ENCODE measurements at regions of chr16 and their contacts with region 1.

Region 1: GRCh38 chr16:30844671-30845449 is 49.0 kb downstream of the BCL7C start:
- DNase-seq: peak; percentile 68 to 89 (median 85)
- H3K4me3 ChIP-seq: no peak overlapping the region
- H3K27ac ChIP-seq: peak overlapping the region in 2 of 5 donors; percentile 11 to 56
- H3K4me1 ChIP-seq: peaks cover 5 to 12% of the 10 kb centered on the region in 2 donors
- H3K27me3 ChIP-seq: no peaks in the 10 kb centered on the region
- CTCF ChIP-seq: peak; percentile 82 to 96 (median 90)
- POLR2A ChIP-seq: no peak

Region 2: DNA sequence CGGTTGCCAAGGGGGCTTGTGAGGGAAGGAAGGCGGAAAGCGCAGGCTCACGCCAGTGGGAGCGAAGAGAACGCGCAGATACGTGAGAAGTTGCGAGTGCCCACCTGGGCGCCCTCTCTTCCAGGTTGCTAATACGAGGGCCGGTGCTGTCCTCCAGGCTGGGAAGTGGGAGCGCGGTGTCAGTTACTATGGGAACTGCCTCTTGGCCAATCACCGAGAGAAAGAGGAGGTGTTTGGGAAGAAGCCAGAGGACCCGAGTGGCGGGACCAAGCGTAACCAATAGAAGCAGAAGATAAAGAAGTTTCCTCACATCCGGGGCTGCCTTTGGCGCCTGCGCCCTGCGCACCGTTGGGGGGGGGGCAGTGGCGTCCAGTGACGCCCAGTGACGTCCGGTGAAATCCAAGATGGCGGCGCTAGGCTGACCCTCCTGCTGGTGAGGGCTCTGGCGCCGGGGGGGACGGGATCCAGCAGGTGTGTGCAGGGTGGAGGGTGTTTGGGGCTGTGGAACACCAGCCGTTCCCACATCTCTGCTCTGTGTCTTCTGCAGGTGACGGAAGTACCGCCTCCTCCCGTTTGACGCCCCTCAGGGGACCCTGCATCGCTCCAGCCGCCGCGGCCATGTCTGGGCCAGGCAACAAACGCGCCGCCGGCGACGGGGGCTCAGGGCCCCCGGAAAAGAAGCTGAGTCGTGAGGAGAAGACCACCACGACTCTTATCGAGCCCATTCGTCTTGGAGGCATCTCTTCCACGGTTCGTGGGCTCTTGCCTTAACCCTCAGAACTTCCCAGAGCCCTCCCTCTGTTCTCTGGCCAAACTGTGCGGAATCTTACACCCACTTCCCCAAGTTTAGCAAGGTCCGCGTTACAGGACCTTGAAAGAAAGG is 82.7 kb before region 1 on chr16 and contains the starts of genes CFAP119 and RNF40:
- intact Hi-C with region 1: no loop called
- DNase-seq: peak; percentile 97 to 99 (median 98)
- H3K4me3 ChIP-seq: peak within 1 kb of the TSS; percentile 58 to 91 (median 80)
- H3K27ac ChIP-seq: peak within 1 kb of the TSS; percentile 35 to 92 (median 87)
- H3K4me1 ChIP-seq: peaks cover 22 to 31% of the 10 kb centered on the region in 2 donors
- H3K27me3 ChIP-seq: no peaks in the 10 kb centered on the region
- CTCF ChIP-seq: no peak
- POLR2A ChIP-seq: peak; percentile 78 to 84
- total RNA-seq, gene CFAP119: 2.3 to 22.1 (median 7.9) TPM
- total RNA-seq, gene RNF40: 86.9 to 164 (median 108) TPM

Region 3: DNA sequence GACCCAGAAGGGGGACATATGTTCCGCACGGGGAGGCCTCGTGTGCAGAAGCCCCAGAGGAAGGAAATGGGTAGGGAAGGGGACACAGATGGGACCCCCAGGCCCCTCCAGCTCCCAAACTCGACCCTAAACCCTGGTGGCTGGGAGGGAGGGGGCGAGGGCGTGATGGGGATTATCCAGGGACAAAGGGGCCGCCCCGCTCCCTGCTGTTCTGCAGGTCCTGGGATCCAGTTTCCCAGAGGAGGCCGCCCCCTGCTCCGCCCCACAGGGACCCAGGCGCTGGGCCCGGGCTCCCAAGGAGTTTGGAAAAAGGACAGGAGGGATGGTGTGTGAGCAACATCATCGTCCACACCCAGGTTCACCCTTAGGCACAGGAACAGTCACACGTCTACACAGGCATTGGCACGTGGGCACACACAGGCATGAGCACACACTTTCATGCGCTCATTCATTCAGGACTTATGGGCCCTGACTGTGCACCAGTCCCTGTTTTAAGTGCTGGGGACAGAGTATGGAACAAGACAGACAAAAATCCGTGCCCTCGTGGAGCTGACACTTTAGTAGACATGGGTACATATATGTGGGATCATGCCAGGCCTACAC is 65.7 kb after region 1 on chr16:
- intact Hi-C with region 1: loop called in 1 of 2 experiments (anchors 5 kb)
- DNase-seq: no peak
- H3K4me3 ChIP-seq: no peak overlapping the region
- H3K27ac ChIP-seq: no peak overlapping the region
- H3K4me1 ChIP-seq: no peaks in the 10 kb centered on the region
- H3K27me3 ChIP-seq: no peaks in the 10 kb centered on the region
- CTCF ChIP-seq: no peak
- POLR2A ChIP-seq: no peak

Region 4: DNA sequence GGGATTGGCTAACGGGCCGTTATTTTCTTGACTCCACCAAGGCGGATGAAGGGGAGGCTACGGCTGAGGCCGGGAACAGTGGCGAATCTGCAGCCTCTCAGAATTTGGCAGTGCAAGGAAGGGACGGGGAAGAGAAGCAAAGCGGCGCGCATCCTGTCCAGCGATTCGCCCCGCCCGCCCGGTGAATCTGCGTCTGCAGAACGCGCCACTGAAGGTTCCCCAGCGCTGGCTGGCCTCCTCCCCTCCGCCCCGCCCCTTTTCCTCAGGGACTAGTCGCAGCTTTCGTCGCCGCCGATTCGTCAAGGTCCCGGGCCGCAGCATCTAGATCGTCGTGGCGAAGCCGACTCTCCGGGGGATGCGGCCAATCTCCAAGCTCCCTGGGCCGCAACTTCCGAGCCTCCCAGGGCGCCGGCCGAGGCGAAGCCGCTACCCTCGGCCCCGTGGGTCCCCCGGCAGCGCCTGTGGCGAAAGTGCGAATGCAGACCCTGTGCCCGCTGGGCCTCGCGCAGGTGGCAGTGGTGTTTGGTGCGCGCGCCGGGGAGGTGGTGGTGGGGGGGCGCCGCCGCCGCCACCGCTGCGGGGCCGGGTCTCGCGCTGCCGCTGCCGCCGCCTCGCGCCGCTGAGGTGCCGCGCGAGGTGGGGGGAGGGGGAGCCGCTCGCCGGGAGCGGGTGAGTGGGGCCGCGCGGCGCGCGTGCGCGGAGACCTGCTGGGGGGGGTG is 112.8 kb after region 1 on chr16 and contains the start of gene SETD1A:
- intact Hi-C with region 1: no loop called
- DNase-seq: peak; percentile 95 to 99 (median 98)
- H3K4me3 ChIP-seq: peak within 1 kb of the TSS; percentile 79 to 93 (median 90)
- H3K27ac ChIP-seq: peak within 1 kb of the TSS; percentile 94 to 99 (median 98)
- H3K4me1 ChIP-seq: peaks cover 15 to 27% of the 10 kb centered on the region in 2 donors
- H3K27me3 ChIP-seq: no peaks in the 10 kb centered on the region
- CTCF ChIP-seq: peak in 5 of 6 experiments; percentile 3 to 45 (median 19)
- POLR2A ChIP-seq: peak; percentile 11 to 78
- total RNA-seq, gene SETD1A: 2.3 to 23.0 (median 11.6) TPM